HCT116 (cell line): ENCODE measurements at regions of chr5 and their contacts with region 1.

Region 1: GRCh38 chr5:129904102-129904666 is at the start of gene CHSY3:
- DNase-seq: peak; percentile 46
- ATAC-seq: peak; percentile 90
- H3K4me3 ChIP-seq: peak within 1 kb of the TSS; percentile 49 to 62
- H3K27ac ChIP-seq: peak within 1 kb of the TSS; percentile 52; the same call in 1 of the 2 replicates
- H3K4me1 ChIP-seq: peaks cover 9 to 28% of the 10 kb centered on the region in 2 experiments; a peak in 3 of 4 replicates
- H3K27me3 ChIP-seq: no peaks in the 10 kb centered on the region
- CTCF ChIP-seq: no peak
- POLR2A ChIP-seq: no peak
- RAD21 ChIP-seq: no peak
- total RNA-seq, gene CHSY3: 2.3 TPM

Region 2: DNA sequence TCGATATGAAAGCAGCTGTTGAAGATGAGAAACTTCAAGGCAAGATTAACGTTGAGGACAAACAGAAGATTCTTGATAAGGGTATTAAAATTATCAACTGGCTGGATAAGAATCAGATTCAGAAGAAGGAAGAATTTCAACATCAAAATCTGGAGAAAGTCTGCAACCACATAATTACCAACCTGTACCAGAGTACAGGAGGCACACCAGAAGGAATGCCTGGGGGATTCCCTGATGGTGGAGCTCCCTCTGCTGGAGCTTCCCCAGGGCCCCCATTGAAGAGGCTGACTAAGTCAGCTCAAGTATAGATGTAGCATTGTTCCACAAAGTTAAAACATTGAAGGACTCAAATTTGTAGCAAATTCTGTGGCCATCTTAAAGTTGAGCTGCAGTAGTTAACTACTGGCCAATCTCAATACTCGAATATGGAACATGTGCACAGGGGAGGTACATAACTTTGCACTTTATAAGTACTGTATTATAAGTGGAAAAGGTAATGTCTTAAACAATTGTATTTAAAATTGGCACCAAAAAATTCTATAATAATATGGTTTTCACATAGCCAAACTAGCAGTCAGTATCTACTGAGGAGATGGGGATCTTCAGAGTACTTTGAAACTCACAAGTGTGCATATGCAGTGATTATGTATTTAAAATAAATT is 237.6 kb after region 1 on chr5:
- CTCF ChIA-PET with region 1: interaction called, 10 read pairs
- POLR2A ChIA-PET with region 1: no interaction called
- RAD21 ChIA-PET with region 1: no interaction called
- intact Hi-C with region 1: loop called (anchors 1 kb)
- DNase-seq: no peak
- ATAC-seq: peak; percentile 80
- H3K4me3 ChIP-seq: no peak overlapping the region
- H3K27ac ChIP-seq: no peak overlapping the region
- H3K4me1 ChIP-seq: no peaks in the 10 kb centered on the region
- H3K27me3 ChIP-seq: no peaks in the 10 kb centered on the region
- CTCF ChIP-seq: peak; percentile 19 to 64 (median 49); a peak in 5 of 6 replicates
- POLR2A ChIP-seq: no peak
- RAD21 ChIP-seq: peak; percentile 62

Region 3: DNA sequence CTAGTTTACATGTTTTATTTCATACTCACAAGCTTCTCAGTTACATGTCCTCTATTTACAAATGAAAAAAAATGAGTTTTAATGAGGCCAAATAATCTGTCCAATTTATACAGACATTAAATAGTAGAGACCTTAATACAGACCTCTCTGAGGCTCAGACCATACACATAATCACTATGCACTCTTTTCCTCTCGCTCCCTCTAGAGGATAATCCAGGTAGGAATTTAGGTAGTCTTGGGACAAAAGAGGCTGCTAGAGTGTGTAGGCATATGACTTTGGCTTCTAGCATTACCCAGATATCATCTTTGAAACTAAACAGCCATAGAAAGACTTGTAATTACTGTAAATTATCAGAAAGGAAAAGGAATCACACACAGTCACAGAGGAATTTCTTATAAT is 816.2 kb after region 1 on chr5:
- CTCF ChIA-PET with region 1: no interaction called
- POLR2A ChIA-PET with region 1: no interaction called
- RAD21 ChIA-PET with region 1: interaction called in 1 of 2 experiments, 3 read pairs
- intact Hi-C with region 1: loop called (anchors 1 kb)
- DNase-seq: peak; percentile 45
- ATAC-seq: peak; percentile 100
- H3K4me3 ChIP-seq: no peak overlapping the region
- H3K27ac ChIP-seq: no peak overlapping the region
- H3K4me1 ChIP-seq: no peaks in the 10 kb centered on the region
- H3K27me3 ChIP-seq: no peaks in the 10 kb centered on the region
- CTCF ChIP-seq: peak; percentile 56 to 74 (median 69); a peak in 5 of 6 replicates
- POLR2A ChIP-seq: no peak
- RAD21 ChIP-seq: peak; percentile 88

Region 4: DNA sequence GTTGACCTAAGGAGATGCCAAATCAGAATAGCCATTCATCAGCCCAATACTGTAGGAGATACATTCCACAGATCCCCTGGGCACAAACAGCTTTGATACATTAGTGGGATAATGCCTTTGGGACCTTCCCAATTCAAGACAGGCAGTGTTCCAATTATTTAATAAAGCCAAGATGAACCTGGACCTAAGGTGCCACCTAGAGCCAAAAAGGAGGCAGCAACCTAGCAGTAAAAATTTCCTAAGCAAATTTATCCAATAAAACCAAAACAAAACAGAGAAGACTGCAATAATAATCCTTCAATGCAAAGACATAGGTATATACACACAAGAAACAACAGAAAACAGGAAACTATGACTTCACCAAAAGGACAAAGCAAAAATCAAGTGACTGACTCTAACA is 1007.9 kb after region 1 on chr5:
- CTCF ChIA-PET with region 1: interaction called, 3 read pairs
- POLR2A ChIA-PET with region 1: no interaction called
- RAD21 ChIA-PET with region 1: interaction called in 1 of 2 experiments, 3 read pairs
- intact Hi-C with region 1: loop called (anchors 1 kb)
- DNase-seq: peak; percentile 19
- ATAC-seq: peak; percentile 71
- H3K4me3 ChIP-seq: no peak overlapping the region
- H3K27ac ChIP-seq: no peak overlapping the region
- H3K4me1 ChIP-seq: no peaks in the 10 kb centered on the region
- H3K27me3 ChIP-seq: no peaks in the 10 kb centered on the region
- CTCF ChIP-seq: peak; percentile 54 to 72 (median 63); a peak in 5 of 6 replicates
- POLR2A ChIP-seq: no peak
- RAD21 ChIP-seq: peak; percentile 85

Region 5: GRCh38 chr5:131109540-131110255 is 1205.5 kb after region 1 on chr5:
- CTCF ChIA-PET with region 1: interaction called, 8 read pairs
- POLR2A ChIA-PET with region 1: no interaction called
- RAD21 ChIA-PET with region 1: no interaction called
- intact Hi-C with region 1: loop called (anchors 1 kb)
- DNase-seq: peak; percentile 35
- ATAC-seq: peak; percentile 90
- H3K4me3 ChIP-seq: no peak overlapping the region
- H3K27ac ChIP-seq: no peak overlapping the region
- H3K4me1 ChIP-seq: peaks cover 2% of the 10 kb centered on the region in 2 experiments; a peak in 2 of 4 replicates
- H3K27me3 ChIP-seq: no peaks in the 10 kb centered on the region
- CTCF ChIP-seq: peak; percentile 67 to 83 (median 72)
- POLR2A ChIP-seq: no peak
- RAD21 ChIP-seq: peak; percentile 83

Region 6: GRCh38 chr5:131382407-131383395 is 1478.5 kb after region 1 on chr5:
- CTCF ChIA-PET with region 1: no interaction called
- POLR2A ChIA-PET with region 1: no interaction called
- RAD21 ChIA-PET with region 1: no interaction called
- intact Hi-C with region 1: loop called (anchors 10 kb)
- DNase-seq: peak; percentile 50
- ATAC-seq: peak; percentile 97
- H3K4me3 ChIP-seq: no peak overlapping the region
- H3K27ac ChIP-seq: no peak overlapping the region
- H3K4me1 ChIP-seq: peaks cover 2 to 9% of the 10 kb centered on the region in 2 experiments; a peak in 2 of 4 replicates
- H3K27me3 ChIP-seq: no peaks in the 10 kb centered on the region
- CTCF ChIP-seq: peak; percentile 51 to 72 (median 67); a peak in 5 of 6 replicates
- POLR2A ChIP-seq: no peak
- RAD21 ChIP-seq: peak; percentile 83

Region 7: DNA sequence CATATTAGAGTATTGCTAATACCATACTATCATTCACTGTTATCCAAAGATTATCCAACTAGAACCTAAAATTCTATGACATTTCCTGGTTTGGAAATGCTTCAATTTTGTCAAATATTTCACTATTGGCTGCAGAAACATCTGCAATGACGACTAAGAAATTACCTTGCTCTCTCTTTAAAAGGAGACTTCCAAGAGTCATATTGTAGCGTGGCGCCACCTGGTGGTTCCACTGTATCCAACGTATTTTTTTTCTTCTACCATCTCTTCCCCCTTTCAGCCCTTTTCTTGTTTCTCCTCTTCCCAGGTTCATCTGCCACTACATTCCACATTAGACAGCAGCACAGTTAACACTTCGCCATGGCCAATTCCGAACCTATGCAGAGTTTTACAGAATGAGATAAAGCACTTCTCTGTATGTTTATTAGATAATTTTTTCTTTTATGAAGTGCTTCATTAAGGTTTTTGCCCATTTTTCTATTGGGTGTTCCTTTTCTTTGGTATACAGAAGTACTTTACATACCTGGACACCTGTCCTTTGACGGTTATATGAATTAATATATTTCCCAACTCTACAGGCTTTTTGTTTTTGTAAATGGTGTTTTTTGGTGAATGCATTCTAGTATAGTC is 1513.2 kb after region 1 on chr5:
- CTCF ChIA-PET with region 1: no interaction called
- POLR2A ChIA-PET with region 1: no interaction called
- RAD21 ChIA-PET with region 1: no interaction called
- intact Hi-C with region 1: loop called (anchors 2 kb)
- DNase-seq: peak; percentile 37
- ATAC-seq: peak; percentile 72
- H3K4me3 ChIP-seq: no peak overlapping the region
- H3K27ac ChIP-seq: no peak overlapping the region
- H3K4me1 ChIP-seq: no peaks in the 10 kb centered on the region
- H3K27me3 ChIP-seq: no peaks in the 10 kb centered on the region
- CTCF ChIP-seq: peak; percentile 60 to 91 (median 74); a peak in 5 of 6 replicates
- POLR2A ChIP-seq: no peak
- RAD21 ChIP-seq: peak; percentile 77